Heart right ventricle (tissue), 16 donors: ENCODE measurements at regions of chr3 and their contacts with region 1.

Region 1: GRCh38 chr3:52536369-52537164 is at the start of gene UQCC5:
- DNase-seq: peak; percentile 96 to 98
- ATAC-seq: peak; percentile 90 to 96 (median 95)
- H3K4me3 ChIP-seq: peak within 1 kb of the TSS; percentile 46 to 93 (median 71)
- H3K27ac ChIP-seq: peak within 1 kb of the TSS; percentile 82 to 96 (median 92)
- H3K4me1 ChIP-seq: peaks cover 24 to 88% (median 61%) of the 10 kb centered on the region in 9 donors
- H3K27me3 ChIP-seq: no peaks in the 10 kb centered on the region
- CTCF ChIP-seq: peak in 1 of 9 donors; percentile 25
- total RNA-seq, gene UQCC5: 30.2 to 98.0 (median 66.9) TPM

Region 2: GRCh38 chr3:52481819-52482521 is 54.6 kb before region 1 on chr3:
- intact Hi-C with region 1: loop called in 1 of 10 experiments (anchors 5 kb)
- DNase-seq: peak in 1 of 2 donors; percentile 29
- ATAC-seq: no peak
- H3K4me3 ChIP-seq: no peak overlapping the region
- H3K27ac ChIP-seq: no peak overlapping the region
- H3K4me1 ChIP-seq: peaks cover 14 to 44% (median 30%) of the 10 kb centered on the region in 9 donors
- H3K27me3 ChIP-seq: no peaks in the 10 kb centered on the region
- CTCF ChIP-seq: peak in 7 of 9 donors; percentile 26 to 50 (median 36)

Region 3: DNA sequence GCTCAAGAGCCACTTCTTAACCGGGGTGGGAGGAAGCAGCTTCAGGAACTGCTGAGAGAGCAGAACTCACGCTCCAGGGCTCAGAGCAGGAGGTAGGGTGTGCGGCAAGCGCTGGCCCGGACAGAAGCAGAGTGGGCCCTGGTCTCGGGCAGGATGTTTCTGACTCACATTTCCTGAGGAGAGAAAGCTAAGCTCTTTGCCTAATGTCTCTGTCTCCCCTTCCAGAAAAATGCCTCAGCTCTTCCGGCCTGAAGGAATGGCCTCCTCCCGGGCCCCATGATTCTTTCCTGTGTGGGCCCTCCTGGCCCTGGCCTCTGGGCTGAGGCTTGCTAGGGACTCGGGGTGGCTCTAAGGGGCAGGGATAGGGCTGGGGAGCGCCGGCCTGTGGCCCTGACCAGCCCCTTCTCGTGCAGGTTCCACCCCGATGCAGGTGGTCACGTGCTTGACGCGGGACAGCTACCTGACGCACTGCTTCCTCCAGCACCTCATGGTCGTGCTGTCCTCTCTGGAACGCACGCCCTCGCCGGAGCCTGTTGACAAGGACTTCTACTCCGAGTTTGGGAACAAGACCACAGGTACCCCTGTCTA is 45.5 kb before region 1 on chr3:
- intact Hi-C with region 1: loop called in 2 of 10 experiments (anchors 5 kb)
- DNase-seq: peak; percentile 50 to 56
- ATAC-seq: peak; percentile 31 to 74 (median 58)
- H3K4me3 ChIP-seq: no peak overlapping the region
- H3K27ac ChIP-seq: peak overlapping the region; percentile 35 to 90 (median 72)
- H3K4me1 ChIP-seq: peaks cover 6 to 72% (median 62%) of the 10 kb centered on the region in 9 donors
- H3K27me3 ChIP-seq: no peaks in the 10 kb centered on the region
- CTCF ChIP-seq: no peak